ENCODE measurements at regions of chr6 and their contacts with region 1.

Region 1: DNA sequence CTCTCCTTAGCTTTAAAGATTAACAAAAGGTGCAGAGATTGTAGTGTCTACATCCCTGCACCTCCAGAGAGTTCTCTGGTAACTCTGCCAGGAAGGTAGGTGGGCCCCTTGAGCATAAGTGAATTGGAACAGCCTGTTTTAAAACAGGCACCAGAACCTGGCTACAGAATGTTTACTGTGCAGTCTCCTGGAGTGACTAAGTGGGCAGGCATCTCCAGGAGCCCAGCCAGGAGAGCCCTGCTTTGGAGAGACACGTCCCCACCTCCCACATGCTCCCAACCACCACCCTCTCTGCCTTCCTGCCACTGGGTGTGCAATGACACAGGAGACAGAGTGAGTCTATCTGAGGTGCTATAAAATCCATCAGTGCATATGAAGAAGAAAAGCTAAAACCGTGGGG is 110.3 kb upstream of the EYA4 start:
- DNase-seq: peak; percentile 87 to 88
- H3K4me3 ChIP-seq: no peak overlapping the region
- H3K27ac ChIP-seq: no peak overlapping the region
- H3K4me1 ChIP-seq: peaks cover 15% of the 10 kb centered on the region
- H3K27me3 ChIP-seq: no peaks in the 10 kb centered on the region
- CTCF ChIP-seq: no peak; the same call in 1 of the 2 replicates

Region 2: GRCh38 chr6:133341607-133342158 is 210.8 kb after region 1 on chr6:
- CTCF ChIA-PET with region 1: no interaction called
- POLR2A ChIA-PET with region 1: no interaction called
- intact Hi-C with region 1: loop called (anchors 2 kb)
- DNase-seq: peak; percentile 37 to 79
- H3K4me3 ChIP-seq: no peak overlapping the region
- H3K27ac ChIP-seq: peak overlapping the region; percentile 56
- H3K4me1 ChIP-seq: peaks cover 22% of the 10 kb centered on the region
- H3K27me3 ChIP-seq: no peaks in the 10 kb centered on the region
- CTCF ChIP-seq: no peak

Region 3: DNA sequence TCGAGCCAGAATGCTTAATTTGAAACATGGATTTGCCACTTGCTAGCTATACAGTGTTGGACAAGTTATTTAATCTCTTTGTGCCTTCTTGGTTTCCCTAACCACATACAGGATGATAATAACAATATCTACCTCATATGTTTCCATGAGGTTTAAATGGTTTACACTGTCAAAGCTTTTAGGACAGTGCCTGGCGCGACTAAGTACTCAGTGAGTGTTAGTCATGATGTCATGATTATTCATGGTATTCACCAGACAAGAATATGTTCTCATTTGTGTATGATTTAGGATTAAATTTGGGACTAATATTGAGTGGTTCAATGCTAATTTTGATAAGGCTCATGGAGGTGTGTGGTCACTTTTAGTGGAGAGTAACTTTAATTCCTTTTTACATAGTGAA is 277.7 kb after region 1 on chr6:
- CTCF ChIA-PET with region 1: no interaction called
- POLR2A ChIA-PET with region 1: no interaction called
- intact Hi-C with region 1: loop called (anchors 5 kb)
- DNase-seq: no peak
- H3K4me3 ChIP-seq: no peak overlapping the region
- H3K27ac ChIP-seq: no peak overlapping the region
- H3K4me1 ChIP-seq: no peaks in the 10 kb centered on the region
- H3K27me3 ChIP-seq: no peaks in the 10 kb centered on the region
- CTCF ChIP-seq: no peak